CD4-positive, alpha-beta memory T cell (primary cell): ENCODE measurements at regions of chr17 and their contacts with region 1.

Region 1: DNA sequence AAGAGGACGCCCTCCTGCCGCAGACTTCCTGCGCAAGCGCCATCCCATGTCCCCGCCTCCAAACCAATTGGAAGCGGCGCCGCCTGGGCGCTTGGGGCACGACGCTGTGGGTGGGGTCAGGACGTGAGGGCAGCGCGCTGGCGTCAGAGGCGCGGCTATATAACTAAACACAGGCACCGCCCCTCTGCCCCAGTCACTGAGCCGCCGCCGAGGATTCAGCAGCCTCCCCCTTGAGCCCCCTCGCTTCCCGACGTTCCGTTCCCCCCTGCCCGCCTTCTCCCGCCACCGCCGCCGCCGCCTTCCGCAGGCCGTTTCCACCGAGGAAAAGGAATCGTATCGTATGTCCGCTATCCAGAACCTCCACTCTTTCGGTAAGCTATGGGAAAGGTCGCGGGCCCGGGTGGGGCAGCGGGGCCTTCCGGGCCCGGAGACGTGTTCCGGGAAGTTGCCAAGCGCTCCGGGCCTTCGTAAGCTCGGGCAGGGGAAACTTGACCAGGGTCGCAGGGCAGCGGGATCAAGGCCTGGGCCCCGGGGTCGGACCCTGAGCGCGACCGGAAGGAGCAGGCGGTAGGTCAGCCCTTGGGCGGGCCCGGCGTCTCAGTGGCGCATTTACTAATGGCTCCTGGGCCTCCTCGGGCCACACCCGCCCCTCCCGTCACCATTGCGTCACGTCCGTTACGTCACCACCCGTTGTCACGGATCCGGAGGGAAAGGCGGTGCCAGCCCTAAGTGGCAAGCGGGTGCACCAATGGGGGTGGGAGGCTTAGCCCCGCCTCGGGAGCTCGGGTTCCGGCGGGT is at the start of gene EIF1:
- DNase-seq: peak; percentile 99 to 100 (median 99)
- H3K4me3 ChIP-seq: peak within 1 kb of the TSS; percentile 89 to 95
- H3K4me3 Mint-ChIP-seq: peak within 1 kb of the TSS; percentile 95 to 98 (median 96)
- H3K27ac ChIP-seq: peak within 1 kb of the TSS; percentile 99
- H3K27ac Mint-ChIP-seq: peak within 1 kb of the TSS; percentile 99 to 100 (median 100)
- H3K4me1 ChIP-seq: peaks cover 36% of the 10 kb centered on the region
- H3K4me1 Mint-ChIP-seq: peaks cover 19 to 60% (median 31%) of the 10 kb centered on the region in 4 donors
- H3K27me3 ChIP-seq: no peaks in the 10 kb centered on the region
- H3K27me3 Mint-ChIP-seq: no peaks in the 10 kb centered on the region
- total RNA-seq, gene EIF1: 776 to 839 TPM

Region 2: DNA sequence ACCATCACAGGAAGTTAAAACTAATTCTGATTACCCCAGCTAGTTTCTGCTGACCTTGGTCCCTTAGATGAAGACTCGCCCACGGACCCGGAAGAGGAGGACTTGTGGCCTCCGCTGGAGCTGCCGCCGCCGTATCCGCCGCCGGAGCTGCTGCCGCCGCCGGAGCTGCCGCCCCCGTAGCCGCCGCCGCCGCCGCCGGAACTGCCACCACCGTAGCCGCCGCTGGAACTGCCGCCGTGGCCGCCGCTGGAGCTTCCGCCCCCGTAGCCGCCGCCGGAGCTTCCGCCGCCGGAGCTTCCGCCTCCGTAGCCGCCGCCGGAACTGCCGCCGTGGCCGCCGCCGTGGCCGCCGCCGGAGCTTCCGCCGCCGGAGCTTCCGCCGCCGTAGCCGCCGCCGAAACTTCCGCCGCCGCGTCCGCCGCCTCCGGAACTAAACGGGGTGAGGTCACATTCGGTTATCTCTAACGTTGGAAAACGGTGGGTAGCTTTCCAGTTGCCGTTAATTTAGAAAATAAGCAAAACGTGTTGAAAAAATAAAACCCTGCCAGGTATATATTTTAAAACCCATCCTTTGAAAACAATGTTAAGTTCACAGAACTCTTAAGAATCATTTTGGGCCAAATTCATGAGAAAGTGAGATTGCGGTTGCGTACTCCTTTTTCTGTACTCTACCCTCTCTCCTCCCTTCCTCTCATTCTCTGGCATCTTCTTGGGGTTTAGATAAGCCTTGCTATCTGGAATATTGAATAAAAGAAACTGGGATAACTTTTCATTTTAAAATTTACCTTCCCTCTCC is 870.0 kb before region 1 on chr17:
- CTCF ChIA-PET with region 1: interaction called, 3 read pairs
- POLR2A ChIA-PET with region 1: interaction called, 44 read pairs
- intact Hi-C with region 1: loop called (anchors 1 kb)
- DNase-seq: peak; percentile 82 to 87 (median 84)
- H3K4me3 ChIP-seq: peak overlapping the region; percentile 65 to 83
- H3K4me3 Mint-ChIP-seq: peak overlapping the region; percentile 84 to 97 (median 94)
- H3K27ac ChIP-seq: peak overlapping the region; percentile 62
- H3K27ac Mint-ChIP-seq: peak overlapping the region; percentile 86 to 97 (median 94)
- H3K4me1 ChIP-seq: peaks cover 22% of the 10 kb centered on the region
- H3K4me1 Mint-ChIP-seq: peaks cover 5 to 31% (median 15%) of the 10 kb centered on the region in 4 donors
- H3K27me3 ChIP-seq: no peaks in the 10 kb centered on the region
- H3K27me3 Mint-ChIP-seq: peaks cover 6 to 12% of the 10 kb centered on the region in 2 donors

Region 3: DNA sequence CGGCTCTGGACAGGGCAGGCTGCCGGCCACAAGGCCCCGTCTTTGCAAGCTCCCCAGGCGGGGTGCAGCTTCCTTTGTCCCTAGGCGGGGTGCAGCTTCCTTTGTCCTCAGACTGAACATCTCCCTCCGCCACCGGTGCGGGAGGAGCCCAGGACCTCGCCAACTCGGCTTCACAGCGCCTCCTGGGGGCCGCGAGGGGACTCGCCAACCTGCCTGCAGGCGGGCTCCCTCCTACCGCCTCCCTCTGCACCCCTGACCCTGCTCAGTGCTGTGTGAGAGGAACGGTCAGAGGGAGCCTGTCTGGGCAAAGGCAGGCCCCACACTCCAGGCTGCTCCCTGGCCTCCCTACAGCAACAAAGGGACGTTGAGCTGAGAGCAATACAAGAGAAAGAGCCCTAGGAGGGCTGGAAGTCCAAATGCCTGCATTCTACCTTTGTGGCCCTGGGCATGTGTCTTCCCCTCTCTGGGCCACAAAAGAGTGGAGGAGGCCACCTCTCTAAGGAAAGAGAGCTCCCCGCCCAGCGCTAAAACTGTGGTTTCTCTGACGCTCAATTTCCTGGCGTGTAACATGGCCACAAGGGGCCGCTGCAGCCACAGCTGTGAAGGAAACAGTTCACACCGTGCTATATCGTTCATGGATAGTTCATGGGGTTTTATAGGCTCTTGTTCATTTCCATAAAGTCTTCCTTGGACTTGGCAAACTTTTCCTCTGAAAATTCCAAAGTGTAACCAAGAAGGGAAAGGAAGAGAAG is 139.9 kb before region 1 on chr17:
- CTCF ChIA-PET with region 1: interaction called, 3 read pairs
- POLR2A ChIA-PET with region 1: interaction called, 10 read pairs
- intact Hi-C with region 1: no loop called
- DNase-seq: peak; percentile 82 to 88 (median 84)
- H3K4me3 ChIP-seq: peak overlapping the region in 1 of 2 donors; percentile 29
- H3K4me3 Mint-ChIP-seq: peak overlapping the region; percentile 27 to 78 (median 64)
- H3K27ac ChIP-seq: peak overlapping the region; percentile 30
- H3K27ac Mint-ChIP-seq: peak overlapping the region; percentile 68 to 84 (median 80)
- H3K4me1 ChIP-seq: peaks cover 17% of the 10 kb centered on the region
- H3K4me1 Mint-ChIP-seq: peaks cover 5 to 20% (median 15%) of the 10 kb centered on the region in 4 donors
- H3K27me3 ChIP-seq: no peaks in the 10 kb centered on the region
- H3K27me3 Mint-ChIP-seq: peaks cover 10 to 11% of the 10 kb centered on the region in 2 donors

Region 4: DNA sequence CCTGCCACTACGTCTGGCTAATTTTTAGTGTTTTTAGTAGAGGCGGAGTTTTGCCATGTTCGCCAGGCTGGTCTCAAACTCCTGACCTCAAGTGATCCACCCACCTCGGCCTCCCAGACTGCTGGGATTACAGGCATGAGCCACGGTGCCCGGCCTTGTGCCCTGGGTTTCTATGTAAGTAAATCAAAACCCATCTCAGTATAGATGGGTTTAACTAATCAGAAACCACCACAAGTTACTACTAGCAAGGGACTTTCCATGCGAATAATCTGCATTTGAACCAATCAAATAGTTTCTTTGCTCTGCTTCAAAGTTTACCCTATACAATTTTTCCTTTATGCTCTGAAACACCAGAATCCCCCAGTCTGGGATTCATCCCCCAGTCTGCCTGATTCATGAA is 16.7 kb before region 1 on chr17:
- CTCF ChIA-PET with region 1: interaction called, 116 read pairs
- POLR2A ChIA-PET with region 1: interaction called, 576 read pairs
- intact Hi-C with region 1: no loop called
- DNase-seq: no peak
- H3K4me3 ChIP-seq: no peak overlapping the region
- H3K4me3 Mint-ChIP-seq: no peak overlapping the region
- H3K27ac ChIP-seq: no peak overlapping the region
- H3K27ac Mint-ChIP-seq: no peak overlapping the region
- H3K4me1 ChIP-seq: peaks cover 18% of the 10 kb centered on the region
- H3K4me1 Mint-ChIP-seq: peaks cover 2 to 21% (median 13%) of the 10 kb centered on the region in 4 donors
- H3K27me3 ChIP-seq: no peaks in the 10 kb centered on the region
- H3K27me3 Mint-ChIP-seq: no peaks in the 10 kb centered on the region

Region 5: DNA sequence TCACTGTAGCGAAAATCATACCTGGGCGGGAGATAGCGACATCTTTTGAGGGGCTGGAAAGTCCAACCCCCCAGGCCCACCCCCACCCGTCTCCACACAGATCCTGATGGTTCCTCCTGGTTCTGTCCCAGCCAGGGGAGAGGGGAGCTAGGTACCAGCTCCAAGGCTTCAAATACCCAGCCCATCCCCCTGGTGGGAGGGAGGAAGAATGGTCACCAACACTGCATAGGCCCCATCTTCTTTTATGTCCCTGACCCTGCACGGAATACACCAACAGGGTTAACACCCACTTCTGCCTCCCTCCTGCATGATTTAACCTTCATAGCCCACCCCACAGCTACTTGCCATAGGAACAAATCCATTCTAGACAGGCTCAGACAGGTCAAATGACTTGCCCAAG is 36.2 kb after region 1 on chr17:
- CTCF ChIA-PET with region 1: no interaction called
- POLR2A ChIA-PET with region 1: no interaction called
- intact Hi-C with region 1: no loop called
- DNase-seq: no peak
- H3K4me3 ChIP-seq: no peak overlapping the region
- H3K4me3 Mint-ChIP-seq: no peak overlapping the region
- H3K27ac ChIP-seq: no peak overlapping the region
- H3K27ac Mint-ChIP-seq: no peak overlapping the region
- H3K4me1 ChIP-seq: no peaks in the 10 kb centered on the region
- H3K4me1 Mint-ChIP-seq: no peaks in the 10 kb centered on the region
- H3K27me3 ChIP-seq: no peaks in the 10 kb centered on the region
- H3K27me3 Mint-ChIP-seq: peaks cover 9 to 20% of the 10 kb centered on the region in 2 donors

Region 6: DNA sequence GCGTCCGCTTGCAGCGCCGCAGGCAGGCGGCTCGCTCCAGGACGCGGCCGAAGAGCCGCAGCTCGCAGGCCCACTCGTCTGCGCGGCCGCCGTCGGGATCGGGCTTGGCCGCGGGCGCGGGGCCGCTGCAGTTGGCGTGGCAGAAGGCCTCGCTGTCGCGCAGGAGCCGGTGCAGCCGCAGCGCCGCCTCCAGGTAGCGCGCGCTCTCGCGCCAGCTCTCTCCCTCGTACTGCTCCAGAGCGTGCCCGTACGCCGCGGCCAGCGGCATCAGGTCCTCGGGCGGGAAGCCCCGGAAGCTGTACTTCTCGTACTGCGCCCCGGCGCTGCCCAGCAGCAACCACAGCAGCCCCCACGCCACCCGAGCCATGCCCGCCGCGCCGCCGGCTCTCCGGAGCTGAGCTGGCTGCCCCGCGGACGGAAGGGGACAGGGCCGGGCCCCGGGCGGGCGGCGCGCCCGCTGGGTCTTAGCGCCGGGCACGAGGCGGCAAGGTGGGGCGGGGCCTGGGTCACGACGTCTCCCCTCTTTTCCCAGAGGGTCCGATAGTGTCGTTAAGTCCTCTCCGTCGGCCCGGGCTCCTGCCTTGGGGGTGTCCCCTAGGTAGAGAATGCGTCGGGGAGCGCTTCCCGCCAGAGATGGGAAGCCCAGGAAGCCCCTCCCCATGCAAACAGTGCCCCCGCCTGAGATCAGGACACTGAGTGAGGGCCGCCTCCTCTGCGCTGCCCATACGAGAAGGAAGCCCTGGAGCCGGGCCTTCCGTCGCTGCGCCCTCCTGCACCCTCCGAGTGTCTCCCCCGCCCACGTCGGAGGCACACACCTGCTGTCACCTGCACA is 122.9 kb after region 1 on chr17 and contains the start of gene P3H4:
- CTCF ChIA-PET with region 1: no interaction called
- POLR2A ChIA-PET with region 1: interaction called, 20 read pairs
- intact Hi-C with region 1: no loop called
- DNase-seq: peak; percentile 76 to 83 (median 80)
- H3K4me3 ChIP-seq: peak within 1 kb of the TSS; percentile 47 to 62
- H3K4me3 Mint-ChIP-seq: peak within 1 kb of the TSS; percentile 87 to 97 (median 92)
- H3K27ac ChIP-seq: peak within 1 kb of the TSS; percentile 45
- H3K27ac Mint-ChIP-seq: peak within 1 kb of the TSS; percentile 57 to 94 (median 75)
- H3K4me1 ChIP-seq: peaks cover 20% of the 10 kb centered on the region
- H3K4me1 Mint-ChIP-seq: peaks cover 14 to 28% (median 19%) of the 10 kb centered on the region in 4 donors
- H3K27me3 ChIP-seq: no peaks in the 10 kb centered on the region
- H3K27me3 Mint-ChIP-seq: no peaks in the 10 kb centered on the region
- total RNA-seq, gene P3H4: 5.9 to 6.8 TPM

Region 7: GRCh38 chr17:41895617-41896016 is 206.7 kb after region 1 on chr17:
- CTCF ChIA-PET with region 1: no interaction called
- POLR2A ChIA-PET with region 1: no interaction called
- intact Hi-C with region 1: no loop called
- DNase-seq: no peak
- H3K4me3 ChIP-seq: no peak overlapping the region
- H3K4me3 Mint-ChIP-seq: no peak overlapping the region
- H3K27ac ChIP-seq: no peak overlapping the region
- H3K27ac Mint-ChIP-seq: peak overlapping the region in 3 of 7 donors; percentile 7 to 48 (median 28)
- H3K4me1 ChIP-seq: no peaks in the 10 kb centered on the region
- H3K4me1 Mint-ChIP-seq: peaks cover 0 to 6% (median 0%) of the 10 kb centered on the region in 4 donors
- H3K27me3 ChIP-seq: no peaks in the 10 kb centered on the region
- H3K27me3 Mint-ChIP-seq: no peaks in the 10 kb centered on the region

Region 8: DNA sequence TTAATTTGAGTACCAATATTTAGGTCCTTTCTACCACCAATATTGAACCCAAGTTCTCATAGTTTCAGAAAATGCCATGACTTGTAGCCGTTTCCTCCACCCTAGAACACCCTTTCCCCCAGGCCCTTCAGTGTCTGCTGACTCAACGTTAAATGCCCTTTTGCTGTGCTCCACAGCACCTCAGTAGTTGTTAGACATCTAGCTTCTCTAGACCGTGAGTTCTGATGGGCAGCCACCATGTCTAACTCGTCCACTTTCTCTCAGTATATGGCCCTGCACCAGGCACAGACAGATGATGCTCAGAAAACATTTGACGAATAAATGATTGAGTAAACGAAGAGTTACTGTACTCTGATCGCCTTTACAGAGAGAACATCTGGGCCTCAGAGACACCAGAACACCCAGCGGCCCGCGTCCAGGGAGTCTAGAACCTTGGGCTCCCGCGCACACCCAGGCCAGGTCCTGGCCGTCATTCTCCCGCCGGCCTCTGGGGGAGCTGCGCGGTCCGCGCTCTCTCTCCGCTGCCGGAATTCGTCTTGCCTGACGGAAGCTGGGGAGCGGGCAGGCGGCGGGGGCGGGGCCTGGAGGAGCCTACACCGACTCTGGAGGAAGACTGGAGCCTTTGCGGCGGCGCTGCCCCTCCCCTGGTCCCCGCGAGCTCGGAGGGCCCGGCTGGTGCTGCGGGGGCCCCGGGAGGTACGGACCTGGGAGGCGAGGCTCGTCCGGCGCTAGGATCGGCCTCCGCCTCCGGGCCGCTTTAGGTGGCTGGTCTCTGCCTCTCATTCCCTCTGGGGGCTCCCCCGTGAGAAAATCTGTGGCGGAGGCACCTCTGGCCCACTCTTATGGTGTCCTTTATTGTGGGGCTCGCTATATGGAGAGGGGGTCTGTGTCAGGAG is 330.9 kb after region 1 on chr17 and contains the start of gene NKIRAS2:
- CTCF ChIA-PET with region 1: no interaction called
- POLR2A ChIA-PET with region 1: interaction called, 17 read pairs
- intact Hi-C with region 1: no loop called
- DNase-seq: peak; percentile 90 to 96 (median 90)
- H3K4me3 ChIP-seq: peak within 1 kb of the TSS; percentile 44 to 79
- H3K4me3 Mint-ChIP-seq: peak within 1 kb of the TSS; percentile 88 to 100 (median 96)
- H3K27ac ChIP-seq: peak within 1 kb of the TSS; percentile 84
- H3K27ac Mint-ChIP-seq: peak within 1 kb of the TSS; percentile 79 to 93 (median 88)
- H3K4me1 ChIP-seq: peaks cover 54% of the 10 kb centered on the region
- H3K4me1 Mint-ChIP-seq: peaks cover 34 to 66% (median 50%) of the 10 kb centered on the region in 4 donors
- H3K27me3 ChIP-seq: no peaks in the 10 kb centered on the region
- H3K27me3 Mint-ChIP-seq: no peaks in the 10 kb centered on the region
- total RNA-seq, gene NKIRAS2: 19.7 TPM